CD8-positive, alpha-beta T cell (primary cell): ENCODE measurements at regions of chr17 and their contacts with region 1.

Region 1: DNA sequence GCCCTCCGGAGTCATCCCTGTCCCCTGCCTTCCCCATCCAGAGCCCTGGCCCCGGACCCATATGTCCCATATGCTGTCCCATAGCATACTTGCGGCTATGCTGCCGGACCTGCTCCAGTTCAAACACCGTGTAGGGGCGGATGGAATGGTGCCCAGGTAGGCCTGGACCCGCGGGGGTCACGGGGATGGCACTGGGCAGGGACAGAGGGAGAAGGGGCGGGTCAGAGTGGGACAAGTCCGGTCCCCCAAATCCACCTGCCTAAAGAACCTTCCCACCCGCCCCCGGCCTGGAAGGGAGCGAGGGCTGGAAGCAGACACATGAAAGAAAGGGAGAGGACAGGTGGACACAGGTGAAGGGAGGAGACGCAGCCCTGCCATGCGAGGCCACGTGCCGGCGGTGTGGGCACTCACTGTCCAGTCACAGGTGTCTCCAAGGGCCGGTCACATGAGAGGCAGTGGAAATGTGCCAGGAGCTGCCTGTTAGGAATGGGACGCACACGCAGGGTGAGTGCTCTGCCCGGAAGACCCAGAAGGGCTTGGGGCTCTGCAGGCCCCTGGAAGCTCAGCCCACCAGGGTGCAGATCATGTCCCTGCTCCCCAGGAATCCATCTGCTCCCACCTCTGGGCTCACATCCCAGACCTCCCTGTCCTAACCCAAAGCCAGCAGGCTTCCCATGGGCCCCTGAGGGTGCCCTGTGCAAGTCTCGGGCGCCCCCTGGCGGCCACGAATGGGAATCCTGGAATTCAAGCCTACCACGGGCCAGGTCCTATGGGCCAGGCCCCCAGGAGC is 14.0 kb downstream of the UBALD2 start:
- DNase-seq: peak; percentile 67 to 95 (median 85)
- ATAC-seq: peak; percentile 91
- H3K4me3 ChIP-seq: no peak overlapping the region
- H3K4me3 Mint-ChIP-seq: no peak overlapping the region
- H3K27ac ChIP-seq: no peak overlapping the region
- H3K27ac Mint-ChIP-seq: no peak overlapping the region
- H3K4me1 ChIP-seq: peaks cover 27% of the 10 kb centered on the region
- H3K4me1 Mint-ChIP-seq: peaks cover 16% of the 10 kb centered on the region
- H3K27me3 ChIP-seq: no peaks in the 10 kb centered on the region
- H3K27me3 Mint-ChIP-seq: no peaks in the 10 kb centered on the region
- CTCF ChIP-seq: peak; percentile 89

Region 2: GRCh38 chr17:76014184-76014924 is 264.8 kb before region 1 on chr17:
- CTCF ChIA-PET with region 1: interaction called, 54 read pairs
- POLR2A ChIA-PET with region 1: no interaction called
- intact Hi-C with region 1: loop called in 1 of 2 experiments (anchors 1 kb)
- DNase-seq: peak; percentile 52 to 90 (median 81)
- ATAC-seq: peak; percentile 100
- H3K4me3 ChIP-seq: peak overlapping the region in 1 of 2 experiments; percentile 20
- H3K4me3 Mint-ChIP-seq: peak overlapping the region; percentile 64
- H3K27ac ChIP-seq: peak overlapping the region in 1 of 2 experiments; percentile 26
- H3K27ac Mint-ChIP-seq: no peak overlapping the region
- H3K4me1 ChIP-seq: peaks cover 14% of the 10 kb centered on the region
- H3K4me1 Mint-ChIP-seq: peaks cover 14% of the 10 kb centered on the region
- H3K27me3 ChIP-seq: no peaks in the 10 kb centered on the region
- H3K27me3 Mint-ChIP-seq: no peaks in the 10 kb centered on the region
- CTCF ChIP-seq: peak; percentile 94

Region 3: GRCh38 chr17:76132574-76133338 is 146.4 kb before region 1 on chr17:
- CTCF ChIA-PET with region 1: interaction called, 62 read pairs
- POLR2A ChIA-PET with region 1: interaction called, 3 read pairs
- intact Hi-C with region 1: no loop called
- DNase-seq: no peak
- ATAC-seq: no peak
- H3K4me3 ChIP-seq: no peak overlapping the region
- H3K4me3 Mint-ChIP-seq: no peak overlapping the region
- H3K27ac ChIP-seq: no peak overlapping the region
- H3K27ac Mint-ChIP-seq: no peak overlapping the region
- H3K4me1 ChIP-seq: peaks cover 27% of the 10 kb centered on the region
- H3K4me1 Mint-ChIP-seq: peaks cover 29% of the 10 kb centered on the region
- H3K27me3 ChIP-seq: no peaks in the 10 kb centered on the region
- H3K27me3 Mint-ChIP-seq: no peaks in the 10 kb centered on the region
- CTCF ChIP-seq: no peak

Region 4: DNA sequence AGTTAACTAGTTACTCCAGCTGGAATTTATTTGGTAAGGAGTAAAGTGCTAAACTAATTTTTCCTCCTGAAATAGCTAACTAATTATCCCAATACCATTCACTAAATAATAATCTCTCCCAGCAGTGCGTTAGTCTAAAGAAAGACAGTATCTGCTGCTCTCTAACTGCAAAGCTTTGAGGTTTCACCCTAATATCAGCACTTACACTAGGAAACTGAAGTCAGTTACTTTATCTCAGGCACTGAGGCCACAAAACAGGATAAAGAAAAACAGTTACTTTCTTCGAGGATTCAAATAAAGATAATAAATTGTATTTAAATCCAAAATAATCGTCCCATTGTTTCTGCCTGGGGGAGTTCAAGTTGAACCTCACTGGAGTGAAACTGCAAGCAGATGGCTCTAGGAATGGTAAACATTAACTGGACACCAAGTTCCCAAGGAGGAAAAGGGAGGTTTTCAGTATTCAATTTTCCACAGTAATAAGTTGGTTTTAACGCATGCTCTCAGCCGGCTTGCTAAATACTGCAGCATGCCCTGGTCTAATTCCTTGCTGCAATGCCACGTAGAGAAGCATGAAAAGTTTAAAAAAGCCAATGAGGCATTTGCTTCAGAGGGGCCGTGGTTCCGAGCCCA is 118.1 kb before region 1 on chr17:
- CTCF ChIA-PET with region 1: interaction called, 12 read pairs
- POLR2A ChIA-PET with region 1: no interaction called
- intact Hi-C with region 1: no loop called
- DNase-seq: no peak
- ATAC-seq: no peak
- H3K4me3 ChIP-seq: no peak overlapping the region
- H3K4me3 Mint-ChIP-seq: no peak overlapping the region
- H3K27ac ChIP-seq: no peak overlapping the region
- H3K27ac Mint-ChIP-seq: no peak overlapping the region
- H3K4me1 ChIP-seq: no peaks in the 10 kb centered on the region
- H3K4me1 Mint-ChIP-seq: peaks cover 9% of the 10 kb centered on the region
- H3K27me3 ChIP-seq: no peaks in the 10 kb centered on the region
- H3K27me3 Mint-ChIP-seq: no peaks in the 10 kb centered on the region
- CTCF ChIP-seq: no peak

Region 5: GRCh38 chr17:76208120-76208519 is 71.0 kb before region 1 on chr17:
- CTCF ChIA-PET with region 1: interaction called, 29 read pairs
- POLR2A ChIA-PET with region 1: no interaction called
- intact Hi-C with region 1: no loop called
- DNase-seq: no peak
- ATAC-seq: no peak
- H3K4me3 ChIP-seq: no peak overlapping the region
- H3K4me3 Mint-ChIP-seq: no peak overlapping the region
- H3K27ac ChIP-seq: peak overlapping the region in 1 of 2 experiments; percentile 40
- H3K27ac Mint-ChIP-seq: peak overlapping the region; percentile 23
- H3K4me1 ChIP-seq: peaks cover 34% of the 10 kb centered on the region
- H3K4me1 Mint-ChIP-seq: peaks cover 56% of the 10 kb centered on the region
- H3K27me3 ChIP-seq: no peaks in the 10 kb centered on the region
- H3K27me3 Mint-ChIP-seq: no peaks in the 10 kb centered on the region
- CTCF ChIP-seq: no peak

Region 6: GRCh38 chr17:76252040-76252954 is 26.9 kb before region 1 on chr17:
- CTCF ChIA-PET with region 1: interaction called, 32 read pairs
- POLR2A ChIA-PET with region 1: interaction called, 11 read pairs
- intact Hi-C with region 1: no loop called
- DNase-seq: peak in 3 of 9 experiments; percentile 48 to 74 (median 70)
- ATAC-seq: peak; percentile 47
- H3K4me3 ChIP-seq: peak overlapping the region in 1 of 2 experiments; percentile 12
- H3K4me3 Mint-ChIP-seq: peak overlapping the region; percentile 61
- H3K27ac ChIP-seq: peak overlapping the region; percentile 7 to 74
- H3K27ac Mint-ChIP-seq: peak overlapping the region; percentile 96
- H3K4me1 ChIP-seq: peaks cover 44% of the 10 kb centered on the region
- H3K4me1 Mint-ChIP-seq: peaks cover 60% of the 10 kb centered on the region
- H3K27me3 ChIP-seq: no peaks in the 10 kb centered on the region
- H3K27me3 Mint-ChIP-seq: no peaks in the 10 kb centered on the region
- CTCF ChIP-seq: no peak

Region 7: DNA sequence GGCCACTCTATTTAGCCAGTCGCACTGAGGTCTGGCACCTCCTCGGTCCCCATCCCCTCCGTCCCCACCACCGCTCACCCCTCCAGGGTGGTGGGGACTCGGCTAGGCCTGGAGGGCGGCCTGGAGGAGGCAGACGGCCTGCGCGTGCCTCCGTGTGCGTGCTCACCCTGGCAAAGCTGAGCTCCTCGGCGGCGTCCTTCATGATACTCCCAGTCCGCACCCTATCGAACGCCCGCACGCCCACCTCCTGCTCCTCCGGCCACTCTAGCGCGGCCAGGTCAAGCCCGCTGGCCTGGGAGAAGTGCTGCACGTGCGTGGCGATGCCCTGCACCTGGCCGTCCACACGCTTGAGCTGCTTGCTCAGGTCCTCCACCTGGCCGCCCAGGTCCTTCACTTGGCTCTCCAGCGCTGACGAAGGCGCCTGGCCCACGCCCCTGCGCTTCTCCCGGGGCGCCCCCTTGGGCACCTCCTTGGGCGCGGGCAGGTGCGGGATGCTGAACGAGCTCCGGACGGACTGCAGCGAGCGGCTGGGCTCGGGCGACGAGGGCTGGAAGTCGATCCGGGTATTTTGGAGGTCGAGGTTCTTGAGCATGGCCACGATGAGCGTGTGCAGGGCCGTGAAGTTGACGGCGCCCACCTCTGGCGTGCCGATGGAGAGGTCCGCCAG is 28.3 kb after region 1 on chr17:
- CTCF ChIA-PET with region 1: interaction called, 14 read pairs
- POLR2A ChIA-PET with region 1: no interaction called
- intact Hi-C with region 1: no loop called
- DNase-seq: no peak
- ATAC-seq: no peak
- H3K4me3 ChIP-seq: no peak overlapping the region
- H3K4me3 Mint-ChIP-seq: no peak overlapping the region
- H3K27ac ChIP-seq: no peak overlapping the region
- H3K27ac Mint-ChIP-seq: no peak overlapping the region
- H3K4me1 ChIP-seq: no peaks in the 10 kb centered on the region
- H3K4me1 Mint-ChIP-seq: peaks cover 1% of the 10 kb centered on the region
- H3K27me3 ChIP-seq: no peaks in the 10 kb centered on the region
- H3K27me3 Mint-ChIP-seq: no peaks in the 10 kb centered on the region
- CTCF ChIP-seq: no peak